Sigmoid colon (tissue), 7 donors: ENCODE measurements at regions of chr9 and their contacts with region 1.

Region 1: DNA sequence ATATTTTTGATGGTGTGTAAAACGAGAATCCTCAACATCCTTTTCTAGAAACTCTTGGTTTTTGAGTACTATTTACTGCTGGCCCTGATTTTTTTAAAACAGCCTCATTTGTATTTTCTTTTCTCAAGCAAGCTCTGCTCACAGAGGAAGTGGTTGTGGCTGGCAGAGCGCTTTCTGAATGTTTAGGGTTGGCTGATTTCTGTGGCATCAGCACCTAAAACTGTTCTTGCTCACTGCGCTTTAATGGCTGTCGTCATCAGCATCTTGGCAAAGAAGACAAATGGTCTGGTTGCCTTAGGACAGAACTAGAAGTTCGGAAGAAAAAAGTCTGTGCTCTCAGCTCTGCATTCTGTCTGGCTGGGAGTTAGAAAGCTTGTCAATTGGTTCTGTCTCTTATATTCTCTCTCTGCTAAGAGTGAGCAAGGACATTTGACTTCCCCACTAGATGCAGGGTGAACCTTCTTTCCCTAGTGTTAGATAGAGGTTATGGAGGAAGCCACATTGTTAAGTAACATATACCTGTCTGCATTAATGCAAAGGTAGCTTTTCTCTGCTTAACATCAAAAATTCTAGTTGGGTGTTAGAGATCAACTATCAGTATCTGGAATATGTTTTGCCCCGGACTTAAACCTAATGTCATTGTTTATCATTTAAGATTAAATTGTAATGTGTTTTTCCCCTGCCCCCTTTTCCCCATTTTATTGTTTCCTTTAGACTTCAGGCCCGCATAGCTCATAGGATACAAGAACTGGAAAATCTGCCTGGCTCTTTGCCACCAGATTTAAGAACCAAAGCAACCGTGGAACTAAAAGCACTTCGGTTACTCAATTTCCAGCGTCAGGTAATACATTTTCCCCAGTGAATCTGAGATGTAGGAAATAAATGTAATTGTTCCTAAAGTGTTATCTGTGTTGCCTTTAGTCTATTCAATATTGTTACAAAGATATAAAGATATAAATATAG is 39.0 kb downstream of the SMARCA2 start:
- DNase-seq: peak; percentile 80
- H3K4me3 ChIP-seq: peak overlapping the region in 1 of 4 donors; percentile 5
- H3K27ac ChIP-seq: peak overlapping the region; percentile 21 to 77 (median 64)
- H3K4me1 ChIP-seq: peaks cover 0 to 45% (median 26%) of the 10 kb centered on the region in 4 donors
- H3K27me3 ChIP-seq: no peaks in the 10 kb centered on the region
- CTCF ChIP-seq: no peak
- EP300 ChIP-seq: peak in 2 of 4 donors; percentile 44 to 57
- POLR2A ChIP-seq: no peak

Region 2: DNA sequence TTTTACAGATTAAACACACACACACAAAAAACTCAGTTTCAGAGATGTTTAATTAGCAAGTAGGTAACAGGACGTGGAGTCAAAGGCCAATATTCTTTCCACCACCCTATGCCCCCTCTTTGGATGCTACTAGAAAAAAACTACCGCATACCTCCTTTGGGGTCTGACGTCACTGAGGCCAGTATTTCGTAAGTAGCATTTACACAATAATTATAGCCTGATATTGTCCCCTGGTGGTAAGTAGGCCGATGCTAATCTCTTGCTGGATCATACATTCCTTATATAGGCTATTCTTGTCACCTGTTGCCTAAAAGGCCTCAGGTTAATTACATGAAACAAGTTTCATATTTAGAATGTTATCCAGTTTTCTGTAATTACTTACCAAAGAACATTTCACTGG is 60.0 kb before region 1 on chr9:
- intact Hi-C with region 1: no loop called
- DNase-seq: no peak
- H3K4me3 ChIP-seq: no peak overlapping the region
- H3K27ac ChIP-seq: no peak overlapping the region
- H3K4me1 ChIP-seq: no peaks in the 10 kb centered on the region
- H3K27me3 ChIP-seq: no peaks in the 10 kb centered on the region
- CTCF ChIP-seq: no peak
- EP300 ChIP-seq: no peak
- POLR2A ChIP-seq: no peak

Region 3: GRCh38 chr9:2022560-2022959 is 31.6 kb before region 1 on chr9:
- intact Hi-C with region 1: loop called (anchors 1 kb)
- DNase-seq: no peak
- H3K4me3 ChIP-seq: no peak overlapping the region
- H3K27ac ChIP-seq: peak overlapping the region in 2 of 4 donors; percentile 75
- H3K4me1 ChIP-seq: peaks cover 0 to 91% (median 86%) of the 10 kb centered on the region in 4 donors
- H3K27me3 ChIP-seq: no peaks in the 10 kb centered on the region
- CTCF ChIP-seq: no peak
- EP300 ChIP-seq: no peak
- POLR2A ChIP-seq: no peak

Region 4: GRCh38 chr9:2116073-2116472 is 61.9 kb after region 1 on chr9:
- intact Hi-C with region 1: no loop called
- DNase-seq: no peak
- H3K4me3 ChIP-seq: no peak overlapping the region
- H3K27ac ChIP-seq: no peak overlapping the region
- H3K4me1 ChIP-seq: peaks cover 0 to 14% (median 1%) of the 10 kb centered on the region in 4 donors
- H3K27me3 ChIP-seq: no peaks in the 10 kb centered on the region
- CTCF ChIP-seq: peak in 1 of 4 experiments; percentile 27
- EP300 ChIP-seq: no peak
- POLR2A ChIP-seq: no peak